Activated T-helper 1 cell treated with anti-CD3 and anti-CD28 coated beads, Interleukin-12 subunit alpha, Interleukin-12 subunit beta, Interleukin-2, Interleukin-4 antibody, amounts not matched to agents 30 ng/mL and 10 ng/mL and 1 ng/mL, durations not matched to agents 14 hours and 24 hours and 36 hours (primary cell): ENCODE measurements at regions of chr18 and their contacts with region 1.

Region 1: DNA sequence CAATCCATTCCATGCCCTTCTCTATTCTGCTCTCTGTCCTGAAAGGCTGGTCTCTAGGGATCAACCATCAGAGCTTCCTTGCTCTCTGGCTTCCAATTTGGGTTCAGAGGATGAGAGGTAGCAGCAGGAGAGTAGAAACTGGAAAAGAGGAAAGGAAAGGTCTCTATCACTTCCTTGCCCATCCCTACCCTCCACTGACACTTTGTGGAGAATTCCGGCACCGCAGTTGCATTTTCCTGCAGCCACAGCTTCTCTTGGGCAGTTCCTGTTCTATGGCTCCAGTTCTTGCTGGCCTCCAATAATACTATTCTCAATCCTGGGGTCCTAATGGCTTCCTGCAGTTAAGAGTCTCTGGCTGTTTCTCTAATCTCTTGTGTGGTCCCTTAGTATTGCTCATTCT is 13.3 kb upstream of the IMPACT start:
- DNase-seq: no peak
- H3K4me3 Mint-ChIP-seq: no peak overlapping the region
- H3K27ac Mint-ChIP-seq: no peak overlapping the region
- H3K4me1 Mint-ChIP-seq: peaks cover 21% of the 10 kb centered on the region
- H3K27me3 Mint-ChIP-seq: peaks cover 10% of the 10 kb centered on the region

Region 2: GRCh38 chr18:23924813-23925212 is 488.3 kb before region 1 on chr18:
- intact Hi-C with region 1: no loop called
- DNase-seq: no peak
- H3K4me3 Mint-ChIP-seq: no peak overlapping the region
- H3K27ac Mint-ChIP-seq: no peak overlapping the region
- H3K4me1 Mint-ChIP-seq: peaks cover 35% of the 10 kb centered on the region
- H3K27me3 Mint-ChIP-seq: peaks cover 5% of the 10 kb centered on the region

Region 3: DNA sequence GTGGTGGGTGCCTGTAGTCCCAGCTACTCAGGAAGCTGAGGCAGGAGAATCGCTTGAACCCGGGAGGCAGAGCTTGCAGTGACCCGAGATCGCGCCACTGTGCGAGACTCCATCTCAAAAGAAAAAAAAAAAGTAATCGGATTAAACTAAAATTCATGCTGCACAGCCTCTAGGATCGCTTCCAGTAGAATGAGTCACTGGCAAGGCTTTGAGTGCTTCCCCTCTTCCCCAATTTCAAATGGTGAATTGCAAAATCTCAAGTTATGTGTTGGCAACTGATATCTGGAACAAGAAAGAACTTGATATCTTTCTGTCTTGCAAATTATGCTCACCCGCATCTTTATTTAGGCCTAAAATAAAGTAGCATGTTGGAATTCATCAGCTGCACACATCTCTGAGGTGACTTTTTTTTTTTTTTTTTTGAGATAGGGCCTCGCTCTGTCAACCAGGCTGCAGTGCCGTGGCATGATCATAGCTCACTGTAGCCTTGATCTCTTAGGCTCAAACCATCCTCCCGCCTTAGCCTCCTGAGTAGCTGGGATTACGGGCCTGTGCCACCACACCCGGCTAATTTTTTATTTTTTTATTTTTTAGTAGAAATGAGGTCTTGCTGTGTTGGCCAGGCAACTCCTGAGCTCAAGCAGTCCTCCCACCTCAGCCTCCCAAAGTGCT is 385.9 kb before region 1 on chr18:
- intact Hi-C with region 1: no loop called
- DNase-seq: no peak
- H3K4me3 Mint-ChIP-seq: no peak overlapping the region
- H3K27ac Mint-ChIP-seq: no peak overlapping the region
- H3K4me1 Mint-ChIP-seq: peaks cover 64% of the 10 kb centered on the region
- H3K27me3 Mint-ChIP-seq: no peaks in the 10 kb centered on the region

Region 4: DNA sequence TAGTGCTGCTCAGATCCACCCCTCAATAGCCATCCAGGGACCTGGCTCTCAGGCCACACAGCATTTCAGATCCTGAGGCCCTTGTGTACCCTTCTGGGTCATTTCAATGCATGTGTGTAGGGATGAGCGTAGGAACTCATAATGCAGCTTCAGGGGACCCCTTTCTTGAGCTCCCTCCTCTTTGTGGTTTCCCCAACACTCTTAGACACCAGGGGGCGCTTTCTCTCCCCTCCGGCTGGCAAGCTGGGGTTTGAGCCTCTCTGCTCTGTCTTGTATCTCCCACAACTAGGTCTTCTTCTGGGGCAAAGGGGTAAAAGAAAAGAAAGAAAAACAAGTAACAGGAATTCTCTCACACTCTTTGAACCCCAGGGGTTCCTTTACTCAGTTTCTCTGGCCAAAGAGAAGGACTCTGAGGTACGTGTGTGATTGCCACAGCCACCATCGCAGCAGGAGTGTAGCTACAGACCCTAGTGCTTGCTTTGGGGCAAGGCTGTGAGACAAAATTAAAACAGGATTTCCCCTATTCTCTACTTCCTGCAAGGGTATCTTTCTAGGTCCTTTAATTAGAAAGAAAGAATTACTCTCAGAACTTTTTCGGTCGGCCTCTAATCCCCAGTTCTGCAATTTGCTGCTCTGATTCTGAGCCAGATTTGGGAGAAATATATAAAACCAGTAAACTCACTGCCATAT is 236.3 kb before region 1 on chr18:
- intact Hi-C with region 1: loop called (anchors 10 kb)
- DNase-seq: no peak
- H3K4me3 Mint-ChIP-seq: no peak overlapping the region
- H3K27ac Mint-ChIP-seq: no peak overlapping the region
- H3K4me1 Mint-ChIP-seq: peaks cover 10% of the 10 kb centered on the region
- H3K27me3 Mint-ChIP-seq: no peaks in the 10 kb centered on the region

Region 5: GRCh38 chr18:24315170-24315569 is 98.0 kb before region 1 on chr18:
- intact Hi-C with region 1: loop called (anchors 5 kb)
- DNase-seq: no peak
- H3K4me3 Mint-ChIP-seq: no peak overlapping the region
- H3K27ac Mint-ChIP-seq: no peak overlapping the region
- H3K4me1 Mint-ChIP-seq: no peaks in the 10 kb centered on the region
- H3K27me3 Mint-ChIP-seq: peaks cover 2% of the 10 kb centered on the region

Region 6: DNA sequence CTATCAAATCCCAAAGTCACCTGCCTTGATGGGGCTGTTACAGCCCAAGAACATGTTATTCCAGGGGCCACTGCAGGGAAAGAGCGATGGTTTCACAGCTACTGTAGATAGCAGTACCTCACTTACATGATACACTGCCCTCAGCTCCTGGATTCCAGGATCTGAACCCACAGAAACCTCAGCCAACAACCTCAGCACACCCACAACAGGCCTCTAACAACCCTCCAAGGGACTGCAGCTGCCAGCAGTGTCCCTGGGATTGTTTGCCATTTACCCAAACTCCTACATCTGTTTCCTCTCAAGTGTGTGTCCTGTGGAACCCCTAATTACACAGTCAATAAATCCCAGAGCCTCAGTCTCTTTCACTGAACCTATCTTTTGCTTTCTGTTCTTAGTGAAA is 43.7 kb before region 1 on chr18:
- intact Hi-C with region 1: loop called (anchors 1 kb)
- DNase-seq: no peak
- H3K4me3 Mint-ChIP-seq: no peak overlapping the region
- H3K27ac Mint-ChIP-seq: peak overlapping the region; percentile 35
- H3K4me1 Mint-ChIP-seq: peaks cover 23% of the 10 kb centered on the region
- H3K27me3 Mint-ChIP-seq: peaks cover 7% of the 10 kb centered on the region

Region 7: GRCh38 chr18:24397694-24398365 is 15.3 kb before region 1 on chr18 and contains the start of gene OSBPL1A:
- intact Hi-C with region 1: loop called (anchors 1 kb)
- DNase-seq: peak; percentile 58
- H3K4me3 Mint-ChIP-seq: peak within 1 kb of the TSS; percentile 83
- H3K27ac Mint-ChIP-seq: peak within 1 kb of the TSS; percentile 45
- H3K4me1 Mint-ChIP-seq: peaks cover 12% of the 10 kb centered on the region
- H3K27me3 Mint-ChIP-seq: peaks cover 22% of the 10 kb centered on the region
- total RNA-seq, gene OSBPL1A: 2.2 and 2.5 TPM in 2 replicates

Region 8: DNA sequence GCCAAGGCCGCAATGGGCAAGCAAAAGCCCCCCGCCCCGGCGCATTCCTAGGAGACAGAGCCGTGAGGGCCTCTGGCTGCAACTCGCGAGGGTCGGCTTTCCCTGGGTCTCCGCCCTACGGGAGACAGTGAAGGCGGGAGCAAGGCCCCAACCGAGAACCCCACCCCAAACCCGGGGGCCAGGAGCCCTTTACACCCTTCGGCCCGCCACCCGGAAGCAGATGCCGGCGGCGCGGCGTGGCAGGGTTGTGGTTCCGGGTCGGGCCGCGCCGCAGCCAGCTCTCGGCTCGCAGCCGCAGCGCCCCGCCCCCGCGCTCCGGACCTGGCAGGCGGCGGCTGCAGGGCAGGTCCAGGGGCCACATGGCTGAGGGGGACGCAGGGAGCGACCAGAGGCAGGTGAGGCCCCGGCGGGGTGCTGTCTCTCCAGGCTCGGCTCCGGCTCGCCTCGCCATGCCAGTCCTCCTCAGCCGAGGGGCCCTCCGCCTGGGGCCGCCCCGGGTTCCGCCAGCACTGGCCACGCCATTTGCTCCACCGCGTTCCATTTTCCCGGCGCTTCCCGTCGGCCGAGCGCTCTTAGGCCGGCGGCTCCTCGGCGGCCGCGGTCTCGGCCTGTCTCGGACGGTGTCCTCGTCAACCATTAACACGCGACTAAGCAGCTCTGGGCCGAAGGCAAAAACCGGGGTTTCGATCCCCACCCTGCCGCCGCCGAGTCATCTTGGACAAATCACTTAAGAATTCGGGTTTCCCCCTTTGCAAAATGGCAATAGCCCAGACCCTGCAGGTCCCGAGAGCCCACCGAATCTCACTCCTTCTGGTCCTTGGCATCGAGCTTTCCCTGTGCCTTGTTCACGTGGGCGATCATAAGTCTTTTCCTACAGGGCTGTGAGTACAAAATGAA is 13.5 kb after region 1 on chr18 and contains the start of gene IMPACT:
- intact Hi-C with region 1: loop called (anchors 1 kb)
- DNase-seq: peak; percentile 64
- H3K4me3 Mint-ChIP-seq: peak within 1 kb of the TSS; percentile 86
- H3K27ac Mint-ChIP-seq: peak within 1 kb of the TSS; percentile 87
- H3K4me1 Mint-ChIP-seq: peaks cover 27% of the 10 kb centered on the region
- H3K27me3 Mint-ChIP-seq: peaks cover 20% of the 10 kb centered on the region
- total RNA-seq, gene IMPACT: 9.5 and 11.8 TPM in 2 replicates

Region 9: DNA sequence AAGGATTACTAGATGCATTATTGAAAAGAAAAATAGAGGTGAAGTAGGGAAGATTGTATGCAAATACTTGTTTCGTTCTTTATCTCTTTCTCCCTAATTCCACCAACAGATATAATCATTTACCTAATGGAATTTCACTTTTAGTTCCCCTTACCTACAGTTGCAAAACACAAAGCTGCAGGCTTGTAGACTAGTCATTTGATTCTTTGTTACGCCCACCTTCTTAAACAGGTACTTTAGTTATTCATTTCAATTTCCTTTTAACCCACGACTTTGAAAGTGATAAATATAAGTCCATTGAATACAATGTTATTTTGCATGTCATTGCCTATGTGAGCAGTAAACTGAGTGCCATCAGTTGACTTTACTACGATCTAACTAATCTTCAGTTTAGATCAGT is 43.4 kb after region 1 on chr18:
- intact Hi-C with region 1: loop called (anchors 1 kb)
- DNase-seq: no peak
- H3K4me3 Mint-ChIP-seq: peak overlapping the region; percentile 26
- H3K27ac Mint-ChIP-seq: peak overlapping the region; percentile 55
- H3K4me1 Mint-ChIP-seq: peaks cover 28% of the 10 kb centered on the region
- H3K27me3 Mint-ChIP-seq: no peaks in the 10 kb centered on the region